ENCODE measurements at regions of chr16 and their contacts with region 1.

Region 1: DNA sequence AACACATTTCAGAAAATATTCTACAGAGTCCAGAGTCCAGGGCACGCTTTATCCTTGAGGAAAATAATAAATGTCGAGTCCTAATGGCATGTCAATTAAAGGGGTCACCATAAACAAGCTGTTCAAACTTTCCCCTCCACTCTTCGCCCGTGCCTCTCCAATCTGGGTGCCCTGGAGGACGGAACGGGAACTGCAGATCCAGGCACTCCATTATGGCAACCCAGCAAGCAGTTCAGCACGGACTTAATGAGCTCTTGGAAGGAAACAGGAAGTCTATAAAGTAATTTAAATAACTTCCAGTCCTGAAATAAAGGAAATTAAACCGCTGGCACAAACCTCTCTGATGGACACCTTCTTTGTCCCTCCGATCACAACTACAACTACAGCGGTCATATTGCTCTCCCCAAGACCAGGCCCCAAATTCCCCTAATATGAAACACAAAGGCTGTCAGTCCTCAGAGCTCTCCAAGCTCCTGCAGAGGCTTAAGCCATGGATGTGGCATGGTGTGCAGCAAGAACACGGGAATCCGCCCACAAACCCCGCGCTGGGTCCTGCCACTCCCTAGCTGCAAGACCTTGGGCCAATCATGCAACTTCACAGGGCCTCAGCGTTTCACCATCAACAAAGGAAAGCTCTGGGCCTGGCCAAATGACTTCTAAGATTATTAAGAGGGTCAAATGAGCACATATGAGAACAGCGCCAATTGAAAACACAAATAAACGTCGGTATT is 52.6 kb downstream of the ZFHX3 start:
- DNase-seq: peak; percentile 62

Region 2: GRCh38 chr16:72979974-72980373 is 15.3 kb before region 1 on chr16:
- CTCF ChIA-PET with region 1: interaction called, 12 read pairs
- POLR2A ChIA-PET with region 1: no interaction called
- DNase-seq: no peak

Measured in HEK293T (cell line).